ENCODE measurements at regions of chr1 and their contacts with region 1.

Region 1: GRCh38 chr1:199684686-199685273 is 342.7 kb upstream of the NR5A2 start:
- DNase-seq: no peak
- H3K4me3 ChIP-seq: no peak overlapping the region
- CTCF ChIP-seq: peak; percentile 72

Region 2: DNA sequence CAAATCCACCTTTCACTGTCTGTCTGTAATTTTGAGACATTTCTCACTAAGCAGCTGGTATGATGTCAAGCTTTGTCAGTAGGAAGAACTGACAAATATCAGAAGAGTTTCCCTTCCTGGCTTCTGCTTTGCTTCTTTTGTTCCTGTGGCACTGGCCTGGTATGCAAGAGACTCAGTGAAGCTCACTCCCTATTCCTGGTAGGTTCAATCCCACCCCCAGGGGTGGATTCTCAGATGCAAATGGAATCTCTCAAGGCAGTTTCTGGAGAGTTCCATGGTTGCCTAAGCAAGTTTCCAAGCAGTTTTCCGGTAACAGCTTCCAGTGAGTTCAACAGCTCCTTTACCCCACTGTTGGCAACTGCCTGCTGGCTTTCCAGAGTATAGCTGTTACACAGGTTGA is 362.5 kb before region 1 on chr1:
- CTCF ChIA-PET with region 1: no interaction called
- POLR2A ChIA-PET with region 1: no interaction called
- DNase-seq: no peak
- H3K4me3 ChIP-seq: no peak overlapping the region
- CTCF ChIP-seq: no peak

Region 3: GRCh38 chr1:199545780-199546179 is 139.0 kb before region 1 on chr1:
- CTCF ChIA-PET with region 1: no interaction called
- POLR2A ChIA-PET with region 1: no interaction called
- DNase-seq: no peak
- H3K4me3 ChIP-seq: no peak overlapping the region
- CTCF ChIP-seq: no peak

Region 4: GRCh38 chr1:199639453-199639852 is 45.3 kb before region 1 on chr1:
- CTCF ChIA-PET with region 1: no interaction called
- POLR2A ChIA-PET with region 1: no interaction called
- DNase-seq: no peak
- H3K4me3 ChIP-seq: no peak overlapping the region
- CTCF ChIP-seq: no peak

Region 5: DNA sequence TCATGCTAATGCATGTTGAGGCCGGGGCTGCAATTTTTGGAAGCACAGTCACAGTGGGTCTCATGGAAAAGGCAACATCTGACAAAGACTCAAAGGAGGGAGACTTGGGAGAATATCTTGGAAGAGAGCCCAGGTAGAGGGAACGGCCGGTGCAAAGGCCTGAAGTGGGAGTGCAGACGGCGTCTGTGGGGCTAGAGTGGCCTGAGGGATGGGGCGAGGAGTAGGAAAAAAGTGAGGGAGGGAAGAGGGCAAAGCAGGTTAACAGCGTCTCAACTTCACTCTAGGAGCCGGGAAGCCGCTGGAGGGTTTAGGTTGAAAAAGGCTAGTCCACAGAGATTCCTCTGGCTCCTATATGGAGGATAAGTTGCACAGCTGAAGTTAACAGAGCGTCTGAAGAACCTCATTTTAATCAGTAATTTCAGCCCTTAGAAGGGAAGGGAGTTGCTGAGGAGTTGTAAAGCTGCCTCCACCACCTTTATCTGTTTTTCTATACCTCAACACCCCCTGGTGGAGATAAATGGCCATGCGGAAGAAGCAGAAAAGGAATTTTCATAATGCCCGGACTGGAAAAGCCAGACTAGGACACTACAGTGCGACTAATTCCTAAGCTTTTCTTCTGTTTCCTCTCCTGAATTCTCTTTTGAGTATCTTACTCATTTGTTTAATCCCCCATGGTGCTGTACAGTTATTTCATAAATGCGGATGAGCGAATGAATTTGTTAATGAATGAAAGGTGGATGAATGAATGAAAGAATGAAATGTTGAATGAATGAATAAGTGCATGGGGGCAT is 803.8 kb after region 1 on chr1:
- CTCF ChIA-PET with region 1: interaction called, 12 read pairs
- POLR2A ChIA-PET with region 1: no interaction called
- DNase-seq: peak; percentile 51
- H3K4me3 ChIP-seq: no peak overlapping the region
- CTCF ChIP-seq: peak; percentile 68